ENCODE measurements at regions of chr3 and their contacts with region 1.

Region 1: DNA sequence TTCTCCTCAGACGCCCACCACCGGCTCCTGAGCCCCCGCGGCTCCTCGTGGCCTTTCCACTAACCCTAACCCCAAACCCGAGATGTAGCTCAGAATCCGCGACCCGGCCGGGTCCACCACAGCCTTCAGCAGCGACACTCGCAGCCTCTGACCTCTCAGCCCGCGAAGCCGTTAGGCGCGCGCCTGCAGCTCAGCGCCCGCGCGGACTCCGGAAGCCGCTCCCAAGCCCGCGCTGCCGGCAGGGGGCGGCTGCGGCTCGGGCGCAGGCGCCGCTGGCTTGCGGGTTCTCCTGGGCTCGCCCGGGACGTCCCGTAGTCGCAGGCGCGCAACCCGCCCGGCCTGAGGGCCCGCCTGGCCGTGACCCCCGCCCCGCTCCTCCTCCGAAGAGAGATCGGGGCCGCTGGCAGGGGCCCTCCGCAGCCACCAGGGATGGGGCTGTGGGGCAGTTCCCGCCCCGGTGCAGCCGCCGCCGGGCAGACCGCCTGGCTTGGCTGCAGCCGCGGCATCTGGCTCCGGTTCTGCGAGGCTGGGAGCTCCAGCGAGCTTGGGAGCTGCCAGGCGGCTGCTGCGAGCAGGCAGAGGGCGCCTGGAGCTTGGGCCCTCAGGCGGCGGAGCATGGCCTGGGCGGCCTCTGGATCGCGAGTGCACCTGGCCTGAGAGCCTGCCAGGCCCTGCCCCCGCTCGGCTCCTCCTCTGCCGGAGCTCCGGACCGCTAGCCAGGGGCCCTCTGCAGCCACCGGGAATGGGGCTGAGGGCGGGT is 120.7 kb downstream of the LMLN start:
- DNase-seq: peak; percentile 54
- ATAC-seq: peak; percentile 86
- H3K4me3 ChIP-seq: peak overlapping the region; percentile 62 to 71
- H3K27ac ChIP-seq: peak overlapping the region; percentile 91
- H3K4me1 ChIP-seq: peaks cover 0 to 19% of the 10 kb centered on the region in 2 experiments; a peak in 2 of 4 replicates
- H3K27me3 ChIP-seq: no peaks in the 10 kb centered on the region
- CTCF ChIP-seq: peak; percentile 0 to 62 (median 49); a peak in 5 of 6 replicates
- POLR2A ChIP-seq: no peak
- RAD21 ChIP-seq: peak; percentile 8; the same call in 1 of the 2 replicates

Region 2: GRCh38 chr3:197068077-197068476 is 1012.6 kb before region 1 on chr3:
- CTCF ChIA-PET with region 1: no interaction called
- POLR2A ChIA-PET with region 1: no interaction called
- RAD21 ChIA-PET with region 1: no interaction called
- intact Hi-C with region 1: no loop called
- DNase-seq: no peak
- ATAC-seq: no peak
- H3K4me3 ChIP-seq: no peak overlapping the region
- H3K27ac ChIP-seq: no peak overlapping the region
- H3K4me1 ChIP-seq: no peaks in the 10 kb centered on the region
- H3K27me3 ChIP-seq: no peaks in the 10 kb centered on the region
- CTCF ChIP-seq: no peak
- POLR2A ChIP-seq: no peak
- RAD21 ChIP-seq: no peak

Region 3: GRCh38 chr3:197564097-197564843 is 516.4 kb before region 1 on chr3:
- CTCF ChIA-PET with region 1: no interaction called
- POLR2A ChIA-PET with region 1: no interaction called
- RAD21 ChIA-PET with region 1: no interaction called
- intact Hi-C with region 1: no loop called
- DNase-seq: no peak
- ATAC-seq: no peak
- H3K4me3 ChIP-seq: no peak overlapping the region
- H3K27ac ChIP-seq: no peak overlapping the region
- H3K4me1 ChIP-seq: no peaks in the 10 kb centered on the region
- H3K27me3 ChIP-seq: no peaks in the 10 kb centered on the region
- CTCF ChIP-seq: no peak
- POLR2A ChIP-seq: no peak
- RAD21 ChIP-seq: no peak

Region 4: GRCh38 chr3:197835509-197835908 is 245.2 kb before region 1 on chr3:
- CTCF ChIA-PET with region 1: no interaction called
- POLR2A ChIA-PET with region 1: no interaction called
- RAD21 ChIA-PET with region 1: no interaction called
- intact Hi-C with region 1: no loop called
- DNase-seq: no peak
- ATAC-seq: no peak
- H3K4me3 ChIP-seq: no peak overlapping the region
- H3K27ac ChIP-seq: no peak overlapping the region
- H3K4me1 ChIP-seq: no peaks in the 10 kb centered on the region
- H3K27me3 ChIP-seq: no peaks in the 10 kb centered on the region
- CTCF ChIP-seq: no peak
- POLR2A ChIP-seq: no peak
- RAD21 ChIP-seq: no peak

Region 5: GRCh38 chr3:197854596-197855343 is 225.9 kb before region 1 on chr3:
- CTCF ChIA-PET with region 1: no interaction called
- POLR2A ChIA-PET with region 1: no interaction called
- RAD21 ChIA-PET with region 1: no interaction called
- intact Hi-C with region 1: no loop called
- DNase-seq: peak; percentile 4
- ATAC-seq: no peak
- H3K4me3 ChIP-seq: no peak overlapping the region
- H3K27ac ChIP-seq: no peak overlapping the region
- H3K4me1 ChIP-seq: no peaks in the 10 kb centered on the region
- H3K27me3 ChIP-seq: no peaks in the 10 kb centered on the region
- CTCF ChIP-seq: no peak
- POLR2A ChIP-seq: no peak
- RAD21 ChIP-seq: no peak

Region 6: GRCh38 chr3:197959898-197960693 is 120.6 kb before region 1 on chr3 and contains the start of gene LMLN:
- CTCF ChIA-PET with region 1: no interaction called
- POLR2A ChIA-PET with region 1: no interaction called
- RAD21 ChIA-PET with region 1: no interaction called
- intact Hi-C with region 1: loop called (anchors 10 kb)
- DNase-seq: peak; percentile 92
- ATAC-seq: peak; percentile 90
- H3K4me3 ChIP-seq: peak within 1 kb of the TSS; percentile 78 to 83
- H3K27ac ChIP-seq: peak within 1 kb of the TSS; percentile 46
- H3K4me1 ChIP-seq: peaks cover 13 to 31% of the 10 kb centered on the region in 2 experiments
- H3K27me3 ChIP-seq: no peaks in the 10 kb centered on the region
- CTCF ChIP-seq: no peak
- POLR2A ChIP-seq: peak; percentile 69
- RAD21 ChIP-seq: no peak
- total RNA-seq, gene LMLN: 7.2 TPM

Region 7: GRCh38 chr3:198093112-198093679 is 12.5 kb after region 1 on chr3:
- CTCF ChIA-PET with region 1: interaction called, 20 read pairs
- POLR2A ChIA-PET with region 1: interaction called, 5 read pairs
- RAD21 ChIA-PET with region 1: no interaction called
- intact Hi-C with region 1: no loop called
- DNase-seq: no peak
- ATAC-seq: no peak
- H3K4me3 ChIP-seq: no peak overlapping the region
- H3K27ac ChIP-seq: no peak overlapping the region
- H3K4me1 ChIP-seq: no peaks in the 10 kb centered on the region
- H3K27me3 ChIP-seq: no peaks in the 10 kb centered on the region
- CTCF ChIP-seq: no peak
- POLR2A ChIP-seq: no peak
- RAD21 ChIP-seq: no peak

Measured in HCT116 (cell line).